ENCODE measurements at regions of chr5 and their contacts with region 1.

Region 1: DNA sequence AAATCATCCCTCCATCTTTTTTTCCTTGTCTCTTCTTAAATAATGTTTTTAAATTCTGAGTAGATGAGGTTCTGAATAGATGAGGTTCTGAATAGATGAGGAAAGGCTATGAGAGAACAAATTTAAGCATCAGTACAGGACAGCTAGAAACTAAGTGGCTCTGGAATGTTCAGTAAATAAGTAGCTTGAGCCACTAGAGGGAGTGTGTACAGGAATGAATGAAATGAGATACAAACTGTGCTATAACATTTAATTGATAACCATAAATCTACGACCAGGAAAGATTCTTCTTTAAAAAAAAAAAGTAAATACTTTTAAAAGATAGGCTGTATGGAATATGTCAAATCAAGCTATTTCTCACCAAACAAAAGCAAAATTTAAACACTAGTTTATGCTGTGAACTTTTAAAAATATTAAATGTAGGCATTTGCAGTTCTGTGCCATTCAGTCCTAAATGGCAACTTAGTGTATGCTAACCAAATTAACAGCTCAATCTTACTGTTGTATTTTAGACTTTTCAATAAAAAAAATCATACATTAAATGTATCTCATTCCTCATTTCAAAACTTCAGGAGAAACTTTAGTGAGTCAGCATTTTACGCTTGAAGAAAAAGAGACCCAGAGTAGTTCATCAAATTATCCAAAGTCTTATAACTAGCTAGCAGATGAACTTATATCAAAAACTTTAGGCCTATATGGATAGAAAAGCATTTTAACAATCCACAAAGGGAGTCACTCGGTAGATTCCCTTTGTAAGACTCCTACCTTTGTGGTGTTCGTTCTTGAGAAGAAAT is 70.4 kb upstream of the SNX2 start:
- DNase-seq: peak; percentile 69
- H3K4me3 Mint-ChIP-seq: no peak overlapping the region
- H3K27ac Mint-ChIP-seq: no peak overlapping the region
- H3K4me1 Mint-ChIP-seq: no peaks in the 10 kb centered on the region
- H3K27me3 Mint-ChIP-seq: no peaks in the 10 kb centered on the region
- CTCF ChIP-seq: peak; percentile 61

Region 2: DNA sequence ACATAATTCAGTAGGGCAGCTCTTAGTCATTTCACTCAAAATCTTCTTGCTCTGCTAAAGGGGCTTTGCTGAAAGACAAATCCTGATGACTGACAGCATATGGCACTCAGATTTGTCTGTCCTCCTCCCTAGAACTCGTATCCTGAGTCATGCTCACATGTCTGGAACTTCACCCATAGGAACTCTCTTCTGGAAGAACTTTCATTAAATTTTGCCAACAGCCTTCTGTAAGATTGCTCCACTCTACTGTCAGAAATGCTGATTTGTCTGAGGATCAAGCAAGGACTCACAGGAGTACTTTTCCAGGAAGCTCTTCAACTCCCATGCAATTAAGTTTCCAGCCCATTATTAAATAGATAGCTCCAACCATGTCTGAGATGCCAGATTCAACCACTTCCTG is 10.7 kb after region 1 on chr5:
- CTCF ChIA-PET with region 1: interaction called, 34 read pairs
- POLR2A ChIA-PET with region 1: interaction called, 8 read pairs
- intact Hi-C with region 1: no loop called
- DNase-seq: peak; percentile 25
- H3K4me3 Mint-ChIP-seq: no peak overlapping the region
- H3K27ac Mint-ChIP-seq: peak overlapping the region; percentile 13
- H3K4me1 Mint-ChIP-seq: peaks cover 10% of the 10 kb centered on the region
- H3K27me3 Mint-ChIP-seq: no peaks in the 10 kb centered on the region
- CTCF ChIP-seq: no peak

Region 3: GRCh38 chr5:122756263-122756911 is 51.9 kb after region 1 on chr5:
- CTCF ChIA-PET with region 1: interaction called, 13 read pairs
- POLR2A ChIA-PET with region 1: interaction called, 4 read pairs
- intact Hi-C with region 1: no loop called
- DNase-seq: peak; percentile 86
- H3K4me3 Mint-ChIP-seq: no peak overlapping the region
- H3K27ac Mint-ChIP-seq: peak overlapping the region; percentile 5
- H3K4me1 Mint-ChIP-seq: peaks cover 39% of the 10 kb centered on the region
- H3K27me3 Mint-ChIP-seq: no peaks in the 10 kb centered on the region
- CTCF ChIP-seq: no peak

Region 4: DNA sequence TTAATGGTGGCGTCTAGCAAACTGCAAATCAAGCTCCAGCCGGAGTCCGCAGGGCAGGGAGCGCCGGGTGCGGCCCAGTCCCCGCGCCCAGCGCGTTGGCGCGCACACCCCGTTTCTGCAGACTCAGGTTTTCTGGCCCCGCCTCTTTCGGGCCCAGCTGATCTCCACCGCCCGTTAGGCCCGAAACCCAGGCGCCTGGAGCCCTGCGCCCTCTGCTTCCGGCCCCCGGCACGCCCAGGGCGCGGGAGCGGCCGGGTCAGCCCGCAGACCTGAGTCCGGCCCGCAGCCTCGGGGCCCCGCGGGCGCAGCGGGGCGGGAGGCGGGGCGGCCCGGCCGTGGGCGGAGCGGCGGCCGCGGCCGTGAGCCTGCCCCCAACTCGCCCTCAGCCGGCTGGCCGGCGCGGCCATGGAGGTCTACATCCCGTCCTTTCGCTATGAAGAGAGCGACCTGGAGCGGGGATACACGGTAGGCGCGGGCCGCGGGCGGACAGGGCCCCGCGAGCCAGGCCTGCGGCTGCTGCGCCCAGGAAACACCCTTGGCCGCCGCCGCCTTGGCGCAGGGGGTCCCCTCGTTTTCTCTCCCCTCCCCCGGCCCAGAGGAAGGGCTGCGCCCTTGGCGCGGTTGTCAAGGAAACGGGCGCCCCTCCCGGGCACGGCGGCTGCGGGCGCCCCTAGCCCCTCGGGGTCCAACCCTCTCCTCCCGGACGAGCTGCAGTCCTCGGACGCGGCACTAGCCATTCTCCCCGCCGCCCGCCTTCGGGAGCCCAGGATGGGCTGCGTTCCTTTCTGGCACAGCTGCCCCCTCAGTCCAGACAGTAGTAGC is 141.0 kb after region 1 on chr5 and contains the start of gene SNX24:
- CTCF ChIA-PET with region 1: interaction called, 21 read pairs
- POLR2A ChIA-PET with region 1: interaction called, 5 read pairs
- intact Hi-C with region 1: loop called (anchors 2 kb)
- DNase-seq: peak; percentile 85
- H3K4me3 Mint-ChIP-seq: peak within 1 kb of the TSS; percentile 85
- H3K27ac Mint-ChIP-seq: peak within 1 kb of the TSS; percentile 91
- H3K4me1 Mint-ChIP-seq: peaks cover 40% of the 10 kb centered on the region
- H3K27me3 Mint-ChIP-seq: no peaks in the 10 kb centered on the region
- CTCF ChIP-seq: no peak
- total RNA-seq, gene SNX24: 97.0 and 98.1 TPM in 2 replicates

Region 5: GRCh38 chr5:122999945-123000563 is 295.6 kb after region 1 on chr5:
- CTCF ChIA-PET with region 1: interaction called, 6 read pairs
- POLR2A ChIA-PET with region 1: interaction called, 3 read pairs
- intact Hi-C with region 1: loop called (anchors 1 kb)
- DNase-seq: peak; percentile 75
- H3K4me3 Mint-ChIP-seq: no peak overlapping the region
- H3K27ac Mint-ChIP-seq: no peak overlapping the region
- H3K4me1 Mint-ChIP-seq: no peaks in the 10 kb centered on the region
- H3K27me3 Mint-ChIP-seq: no peaks in the 10 kb centered on the region
- CTCF ChIP-seq: peak; percentile 74

Region 6: GRCh38 chr5:123344816-123345426 is 640.5 kb after region 1 on chr5:
- CTCF ChIA-PET with region 1: interaction called, 10 read pairs
- POLR2A ChIA-PET with region 1: no interaction called
- intact Hi-C with region 1: no loop called
- DNase-seq: peak; percentile 56
- H3K4me3 Mint-ChIP-seq: no peak overlapping the region
- H3K27ac Mint-ChIP-seq: no peak overlapping the region
- H3K4me1 Mint-ChIP-seq: no peaks in the 10 kb centered on the region
- H3K27me3 Mint-ChIP-seq: no peaks in the 10 kb centered on the region
- CTCF ChIP-seq: peak; percentile 66